ENCODE measurements at regions of chr16 and their contacts with region 1.

Region 1: DNA sequence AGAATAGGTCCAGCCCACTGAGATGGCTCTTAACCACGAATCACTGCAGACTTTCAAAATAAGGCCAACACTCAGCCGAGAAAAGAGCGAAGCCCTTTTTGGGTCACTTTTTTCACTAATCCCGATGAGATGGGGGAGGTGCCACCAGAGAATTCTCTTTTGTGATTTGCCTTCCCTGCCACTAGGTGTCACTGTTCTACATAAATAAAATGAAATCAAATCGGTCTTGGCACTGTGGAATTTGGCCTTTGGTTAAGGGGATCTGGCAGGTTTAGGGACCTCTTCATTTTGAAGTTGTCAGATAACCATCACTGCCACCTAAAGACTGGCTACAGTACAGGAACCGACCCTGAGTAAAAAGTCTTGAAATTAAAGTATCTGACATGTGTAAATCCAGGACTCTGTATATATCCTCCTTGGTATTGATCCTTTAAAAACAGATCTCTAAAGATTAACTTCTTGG is 147.0 kb downstream of the HS3ST4 start:
- H3K4me3 Mint-ChIP-seq: no peak overlapping the region
- H3K27ac Mint-ChIP-seq: no peak overlapping the region
- H3K4me1 Mint-ChIP-seq: no peaks in the 10 kb centered on the region
- H3K27me3 Mint-ChIP-seq: no peaks in the 10 kb centered on the region

Region 2: DNA sequence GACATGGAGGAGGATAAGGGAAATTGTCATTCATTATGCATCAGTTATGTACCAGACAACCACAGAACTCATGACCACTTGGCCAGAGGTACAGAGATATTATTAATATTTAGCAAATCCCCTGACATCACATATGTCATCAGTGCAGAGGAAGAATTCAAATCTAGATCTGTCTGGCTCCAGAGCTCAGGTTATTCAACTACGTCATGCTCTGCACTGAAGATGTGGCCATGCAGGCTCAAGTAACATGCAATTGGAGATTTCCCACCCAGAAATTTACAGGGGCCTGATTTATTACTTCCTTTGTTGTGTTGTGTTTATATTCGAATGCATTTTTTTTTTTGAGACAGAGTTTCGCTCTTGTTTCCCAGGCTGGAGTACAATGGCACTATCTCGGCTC is 77.3 kb after region 1 on chr16:
- intact Hi-C with region 1: no loop called
- H3K4me3 Mint-ChIP-seq: no peak overlapping the region
- H3K27ac Mint-ChIP-seq: no peak overlapping the region
- H3K4me1 Mint-ChIP-seq: no peaks in the 10 kb centered on the region
- H3K27me3 Mint-ChIP-seq: no peaks in the 10 kb centered on the region

Region 3: GRCh38 chr16:25988084-25988483 is 149.3 kb after region 1 on chr16:
- intact Hi-C with region 1: no loop called
- H3K4me3 Mint-ChIP-seq: no peak overlapping the region
- H3K27ac Mint-ChIP-seq: no peak overlapping the region
- H3K4me1 Mint-ChIP-seq: no peaks in the 10 kb centered on the region
- H3K27me3 Mint-ChIP-seq: no peaks in the 10 kb centered on the region

Region 4: GRCh38 chr16:26645614-26646013 is 806.9 kb after region 1 on chr16:
- intact Hi-C with region 1: loop called (anchors 5 kb)
- H3K4me3 Mint-ChIP-seq: no peak overlapping the region
- H3K27ac Mint-ChIP-seq: no peak overlapping the region
- H3K4me1 Mint-ChIP-seq: no peaks in the 10 kb centered on the region
- H3K27me3 Mint-ChIP-seq: peaks cover 2% of the 10 kb centered on the region

Region 5: GRCh38 chr16:27109666-27110523 is 1271.1 kb after region 1 on chr16:
- intact Hi-C with region 1: loop called (anchors 5 kb)
- H3K4me3 Mint-ChIP-seq: peak overlapping the region; percentile 57
- H3K27ac Mint-ChIP-seq: no peak overlapping the region
- H3K4me1 Mint-ChIP-seq: peaks cover 17% of the 10 kb centered on the region
- H3K27me3 Mint-ChIP-seq: peaks cover 29% of the 10 kb centered on the region

Measured in dendritic cell treated with granulocyte-macrophage colony-stimulating factor and Interleukin-4, amounts not matched to agents 40 ng/mL and 50 ng/mL, for 4 days (primary cell).